Transverse colon (tissue), 4 donors: ENCODE measurements at regions of chr18 and their contacts with region 1.

Region 1: GRCh38 chr18:38563396-38563980 is 997.9 kb upstream of the CELF4 start:
- DNase-seq: no peak
- H3K4me3 ChIP-seq: no peak overlapping the region
- H3K27ac ChIP-seq: no peak overlapping the region
- H3K4me1 ChIP-seq: no peaks in the 10 kb centered on the region
- H3K27me3 ChIP-seq: no peaks in the 10 kb centered on the region
- CTCF ChIP-seq: no peak
- EP300 ChIP-seq: no peak
- POLR2A ChIP-seq: no peak

Region 2: DNA sequence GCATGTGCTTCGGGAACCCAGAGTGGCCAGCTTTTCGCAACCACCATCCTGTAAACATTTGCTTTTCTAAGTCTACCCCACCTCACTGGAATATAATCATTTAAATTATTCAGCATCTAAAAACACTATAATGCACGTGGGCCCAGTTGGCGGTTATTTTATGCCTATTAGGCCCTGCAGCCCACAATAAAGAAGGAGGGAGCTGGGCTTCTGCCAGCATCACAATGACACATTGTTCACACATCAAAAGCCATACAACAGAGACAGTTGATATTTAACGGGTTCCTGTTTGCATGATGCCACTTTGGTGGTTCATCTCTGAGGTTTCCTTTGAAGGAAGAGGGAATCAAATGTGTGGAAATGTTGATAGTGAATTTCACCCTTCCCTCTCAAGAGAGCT is 81.9 kb before region 1 on chr18:
- in situ Hi-C with region 1: no loop called
- intact Hi-C with region 1: loop called (anchors 10 kb)
- DNase-seq: no peak
- H3K4me3 ChIP-seq: no peak overlapping the region
- H3K27ac ChIP-seq: no peak overlapping the region
- H3K4me1 ChIP-seq: no peaks in the 10 kb centered on the region
- H3K27me3 ChIP-seq: no peaks in the 10 kb centered on the region
- CTCF ChIP-seq: no peak
- EP300 ChIP-seq: no peak
- POLR2A ChIP-seq: no peak

Region 3: DNA sequence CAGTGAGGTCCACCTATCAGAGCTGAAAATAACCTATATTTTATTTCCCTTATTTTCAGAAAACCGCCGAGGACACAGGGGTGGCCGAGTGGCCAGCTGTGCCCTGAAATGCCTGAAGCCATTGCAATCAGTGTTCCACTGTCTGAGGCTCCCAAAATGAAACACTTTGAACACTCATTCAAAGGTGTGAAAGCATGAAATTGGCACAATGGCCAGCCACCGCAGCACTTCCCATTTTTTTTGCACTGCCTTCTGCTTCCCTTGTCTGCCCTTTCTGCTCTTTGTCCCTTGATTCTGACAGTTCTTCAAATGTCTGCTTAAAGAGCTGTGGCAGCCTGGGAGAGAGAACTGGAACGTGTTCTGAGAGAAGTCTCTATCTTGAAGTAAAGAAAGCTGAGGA is 129.6 kb after region 1 on chr18:
- in situ Hi-C with region 1: no loop called
- intact Hi-C with region 1: no loop called
- DNase-seq: no peak
- H3K4me3 ChIP-seq: no peak overlapping the region
- H3K27ac ChIP-seq: no peak overlapping the region
- H3K4me1 ChIP-seq: no peaks in the 10 kb centered on the region
- H3K27me3 ChIP-seq: no peaks in the 10 kb centered on the region
- CTCF ChIP-seq: no peak
- EP300 ChIP-seq: no peak
- POLR2A ChIP-seq: no peak